Right ventricle myocardium inferior (tissue), 1 donor: ENCODE measurements at regions of chr6 and their contacts with region 1.

Region 1: DNA sequence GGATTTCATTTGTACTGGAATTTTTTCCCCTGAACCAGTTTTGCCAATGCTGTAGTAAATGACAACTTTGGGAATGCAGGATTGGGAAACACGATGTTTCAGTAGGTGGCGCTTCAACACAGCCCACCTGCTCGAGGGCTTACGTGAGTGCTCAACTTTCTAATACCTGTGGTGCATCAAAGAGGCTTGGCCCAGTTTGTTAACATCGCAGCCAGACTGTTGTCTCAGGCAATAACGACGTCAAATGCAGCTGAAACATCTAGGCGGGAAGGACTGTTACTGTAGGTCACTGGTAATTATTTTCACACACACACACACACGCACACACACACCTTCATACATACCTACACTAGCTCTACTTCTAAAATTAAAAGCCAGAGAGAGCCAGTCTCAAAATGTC is 815.5 kb upstream of the SLC35B3 start:
- DNase-seq: no peak
- ATAC-seq: peak; percentile 57

Region 2: DNA sequence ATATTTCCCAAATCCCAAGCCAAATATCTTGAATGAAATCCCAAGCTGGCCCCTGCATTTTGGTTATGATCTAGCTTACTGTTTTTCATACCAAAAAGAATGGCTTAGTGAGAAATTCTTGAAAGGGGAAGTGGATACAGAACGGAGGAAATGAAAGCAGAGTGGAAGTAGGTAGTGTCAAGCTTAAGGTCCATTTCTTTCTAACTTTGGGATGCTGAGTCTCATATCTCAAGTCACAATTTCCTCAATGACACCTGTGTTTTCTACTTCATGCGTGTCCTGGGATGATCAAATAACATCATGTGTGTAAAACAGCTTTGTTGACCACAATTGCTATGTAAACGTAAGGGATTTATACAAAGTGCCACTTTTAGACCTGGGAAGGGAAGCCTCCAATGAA is 576.7 kb before region 1 on chr6:
- intact Hi-C with region 1: no loop called
- DNase-seq: no peak
- ATAC-seq: no peak

Region 3: GRCh38 chr6:8993111-8993510 is 257.7 kb before region 1 on chr6:
- intact Hi-C with region 1: no loop called
- DNase-seq: no peak
- ATAC-seq: no peak

Region 4: GRCh38 chr6:9412951-9413559 is 162.2 kb after region 1 on chr6:
- intact Hi-C with region 1: loop called (anchors 2 kb)
- DNase-seq: no peak
- ATAC-seq: peak; percentile 67

Region 5: GRCh38 chr6:9428421-9429172 is 177.7 kb after region 1 on chr6:
- intact Hi-C with region 1: no loop called
- DNase-seq: no peak
- ATAC-seq: no peak